ENCODE measurements at regions of chr1 and their contacts with region 1.

Region 1: DNA sequence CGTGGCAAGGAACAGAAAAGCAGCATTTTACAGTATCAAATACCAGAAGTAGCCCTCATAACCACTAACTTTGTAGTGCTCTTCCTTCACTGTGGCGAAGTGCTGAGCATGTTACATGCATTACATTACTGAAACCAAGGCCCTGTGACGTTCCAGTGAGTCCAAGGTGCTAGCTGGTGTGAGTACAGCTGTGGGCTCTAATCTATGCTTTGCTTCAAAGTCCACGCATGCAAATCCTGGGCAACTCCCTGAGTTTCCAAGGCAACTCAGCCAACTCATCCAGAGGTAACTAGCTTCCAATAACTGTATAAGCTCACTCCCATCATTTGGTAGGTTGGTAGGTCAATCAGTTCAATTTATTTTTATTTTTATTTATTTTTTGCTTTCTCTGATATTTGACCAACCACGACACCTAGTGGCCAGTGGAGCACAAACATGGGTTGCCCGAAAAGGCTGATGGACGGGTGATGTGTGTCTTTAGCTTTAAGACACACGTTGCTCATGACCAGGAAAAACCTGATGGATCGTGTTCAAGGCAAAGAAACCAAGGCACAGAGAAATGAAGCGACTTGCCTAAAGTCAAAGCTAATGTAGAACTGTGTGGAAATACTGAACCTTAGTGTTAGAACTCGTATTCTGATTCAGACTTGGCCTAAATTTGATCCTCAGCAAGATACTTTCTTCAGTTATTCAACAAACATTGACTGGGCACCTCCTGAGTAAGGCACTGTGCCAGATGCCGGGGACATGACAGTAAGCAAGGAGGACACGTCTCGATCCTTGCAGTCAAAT is 73.0 kb downstream of the GNG12 start:
- DNase-seq: peak in 1 of 2 donors; percentile 60
- ATAC-seq: peak; percentile 82
- H3K4me3 ChIP-seq: no peak overlapping the region
- H3K27ac ChIP-seq: peak overlapping the region in 1 of 2 donors; percentile 80
- H3K4me1 ChIP-seq: peaks cover 0 to 2% of the 10 kb centered on the region in 2 donors
- H3K27me3 ChIP-seq: no peaks in the 10 kb centered on the region

Region 2: DNA sequence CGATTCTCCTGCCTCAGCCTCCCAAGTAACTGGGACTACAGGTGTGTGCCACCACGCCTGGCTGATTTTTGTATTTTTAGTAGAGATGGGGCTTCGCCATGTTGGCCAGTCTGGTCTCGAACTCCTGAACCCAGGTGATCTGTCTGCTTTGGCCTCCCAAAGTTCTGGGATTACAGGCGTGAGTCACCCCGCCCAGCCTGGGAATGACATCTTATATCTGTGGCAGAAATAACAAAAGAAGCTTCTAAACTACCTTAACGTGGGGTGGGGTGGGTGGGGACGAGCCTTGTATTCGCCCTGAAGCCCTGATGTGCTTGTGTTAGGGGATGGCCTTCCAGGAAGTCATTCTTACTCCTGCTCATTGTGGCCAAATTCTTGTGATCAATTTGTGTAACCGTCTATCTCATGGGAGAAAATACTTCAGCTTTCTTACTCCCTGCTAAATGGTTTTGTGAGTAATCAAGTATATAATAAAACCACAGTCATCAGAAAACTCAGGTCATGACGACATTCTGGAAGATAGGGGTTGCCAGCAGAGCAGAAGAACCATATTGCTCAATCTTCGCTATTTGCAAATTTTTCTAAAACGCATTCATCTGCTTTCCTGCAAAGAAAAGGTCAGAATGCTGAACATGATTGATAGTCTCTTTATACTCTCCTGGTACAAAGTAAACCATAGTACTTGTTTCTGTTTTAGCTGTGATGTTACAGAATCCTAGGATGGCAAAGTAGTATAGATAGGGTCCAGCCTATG is 227.0 kb after region 1 on chr1:
- intact Hi-C with region 1: loop called (anchors 10 kb)
- DNase-seq: no peak
- ATAC-seq: no peak
- H3K4me3 ChIP-seq: no peak overlapping the region
- H3K27ac ChIP-seq: no peak overlapping the region
- H3K4me1 ChIP-seq: peaks cover 4 to 8% of the 10 kb centered on the region in 2 donors
- H3K27me3 ChIP-seq: no peaks in the 10 kb centered on the region